Mammary epithelial cell (primary cell): ENCODE measurements at regions of chr19 and their contacts with region 1.

Region 1: DNA sequence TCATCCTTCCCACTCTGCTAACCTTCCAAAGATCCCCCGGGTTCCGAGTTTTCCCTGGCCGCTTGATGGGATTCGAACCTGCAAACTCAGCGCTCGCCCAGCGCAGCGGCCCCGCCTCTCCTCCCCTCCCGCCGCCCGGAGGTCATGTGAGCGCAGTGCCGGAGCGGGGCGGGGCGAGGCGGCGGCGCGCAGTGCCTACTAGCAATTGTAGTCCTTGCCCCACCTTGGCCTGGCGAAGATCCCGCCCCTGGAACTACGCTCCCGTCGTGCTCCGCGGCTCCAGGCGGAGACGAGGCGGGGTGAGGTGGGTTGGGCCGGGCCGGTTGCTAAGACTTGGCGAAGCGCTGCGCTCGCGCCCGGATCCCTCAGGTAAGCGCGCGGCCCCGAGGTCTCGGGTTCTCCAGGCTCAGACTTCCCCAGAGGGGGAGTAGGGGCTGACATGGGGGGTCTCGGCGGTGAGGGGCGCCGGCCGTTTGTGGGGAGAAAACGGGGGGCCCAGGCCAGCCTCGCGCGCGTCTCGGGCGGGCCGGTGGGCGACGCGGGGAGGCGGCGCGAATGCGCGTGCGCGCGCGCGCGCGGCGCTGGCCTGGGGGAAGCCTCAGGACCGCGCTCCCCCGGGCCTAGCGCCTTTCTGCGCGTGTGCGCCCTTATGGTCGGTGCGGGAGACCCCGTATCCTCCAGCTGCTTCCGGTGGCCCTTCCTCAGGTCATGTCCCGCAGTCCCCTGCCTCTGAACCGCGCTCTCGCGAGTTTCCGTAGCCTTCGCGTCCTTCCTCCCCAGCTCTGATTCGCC is at the starts of genes ADAT3 and SCAMP4:
- DNase-seq: peak; percentile 99
- H3K4me3 ChIP-seq: peak within 1 kb of the TSS; percentile 57 to 80 (median 62)
- H3K27ac ChIP-seq: peak within 1 kb of the TSS; percentile 41
- H3K4me1 ChIP-seq: peaks cover 38% of the 10 kb centered on the region
- H3K27me3 ChIP-seq: no peaks in the 10 kb centered on the region
- CTCF ChIP-seq: no peak
- total RNA-seq, gene ADAT3: 3.5 to 7.3 TPM
- total RNA-seq, gene SCAMP4: 70.2 to 76.5 TPM

Region 2: GRCh38 chr19:1884719-1885334 is 20.4 kb before region 1 on chr19:
- CTCF ChIA-PET with region 1: no interaction called
- dilution Hi-C with region 1: no loop called
- in situ Hi-C with region 1: no loop called
- intact Hi-C with region 1: loop called (anchors 1 kb)
- DNase-seq: no peak
- H3K4me3 ChIP-seq: peak overlapping the region; percentile 90 to 98 (median 91)
- H3K27ac ChIP-seq: peak overlapping the region; percentile 76
- H3K4me1 ChIP-seq: peaks cover 20% of the 10 kb centered on the region
- H3K27me3 ChIP-seq: no peaks in the 10 kb centered on the region
- CTCF ChIP-seq: no peak